Testis (tissue), 5 donors: ENCODE measurements at regions of chr13 and their contacts with region 1.

Region 1: GRCh38 chr13:110412132-110412914 is 105.2 kb downstream of the COL4A2 start:
- DNase-seq: peak; percentile 90
- H3K4me3 ChIP-seq: no peak overlapping the region
- H3K27ac ChIP-seq: peak overlapping the region; percentile 60 to 84
- H3K4me1 ChIP-seq: peaks cover 32% of the 10 kb centered on the region
- H3K27me3 ChIP-seq: no peaks in the 10 kb centered on the region
- CTCF ChIP-seq: peak; percentile 87 to 90 (median 90)
- POLR2A ChIP-seq: no peak

Region 2: GRCh38 chr13:110225609-110226562 is 186.4 kb before region 1 on chr13:
- intact Hi-C with region 1: loop called (anchors 10 kb)
- DNase-seq: no peak
- H3K4me3 ChIP-seq: no peak overlapping the region
- H3K27ac ChIP-seq: no peak overlapping the region
- H3K4me1 ChIP-seq: peaks cover 6% of the 10 kb centered on the region
- H3K27me3 ChIP-seq: no peaks in the 10 kb centered on the region
- CTCF ChIP-seq: no peak
- POLR2A ChIP-seq: no peak

Region 3: GRCh38 chr13:110340812-110341444 is 71.4 kb before region 1 on chr13:
- intact Hi-C with region 1: loop called (anchors 10 kb)
- DNase-seq: peak; percentile 55
- H3K4me3 ChIP-seq: no peak overlapping the region
- H3K27ac ChIP-seq: peak overlapping the region; percentile 81 to 82
- H3K4me1 ChIP-seq: peaks cover 45% of the 10 kb centered on the region
- H3K27me3 ChIP-seq: no peaks in the 10 kb centered on the region
- CTCF ChIP-seq: no peak
- POLR2A ChIP-seq: no peak

Region 4: GRCh38 chr13:110575322-110576069 is 163.2 kb after region 1 on chr13:
- intact Hi-C with region 1: no loop called
- DNase-seq: peak; percentile 52
- H3K4me3 ChIP-seq: no peak overlapping the region
- H3K27ac ChIP-seq: no peak overlapping the region
- H3K4me1 ChIP-seq: no peaks in the 10 kb centered on the region
- H3K27me3 ChIP-seq: no peaks in the 10 kb centered on the region
- CTCF ChIP-seq: no peak
- POLR2A ChIP-seq: no peak